Right cardiac atrium (tissue), 5 donors: ENCODE measurements at regions of chr17 and their contacts with region 1.

Region 1: GRCh38 chr17:6555331-6556120 is 829 bp downstream of the PITPNM3 start:
- DNase-seq: peak in 2 of 3 donors; percentile 54 to 67
- ATAC-seq: peak; percentile 38 to 50
- H3K4me3 ChIP-seq: peak overlapping the region; percentile 76
- H3K27ac ChIP-seq: no peak overlapping the region
- H3K4me1 ChIP-seq: no peaks in the 10 kb centered on the region
- H3K27me3 ChIP-seq: no peaks in the 10 kb centered on the region

Region 2: DNA sequence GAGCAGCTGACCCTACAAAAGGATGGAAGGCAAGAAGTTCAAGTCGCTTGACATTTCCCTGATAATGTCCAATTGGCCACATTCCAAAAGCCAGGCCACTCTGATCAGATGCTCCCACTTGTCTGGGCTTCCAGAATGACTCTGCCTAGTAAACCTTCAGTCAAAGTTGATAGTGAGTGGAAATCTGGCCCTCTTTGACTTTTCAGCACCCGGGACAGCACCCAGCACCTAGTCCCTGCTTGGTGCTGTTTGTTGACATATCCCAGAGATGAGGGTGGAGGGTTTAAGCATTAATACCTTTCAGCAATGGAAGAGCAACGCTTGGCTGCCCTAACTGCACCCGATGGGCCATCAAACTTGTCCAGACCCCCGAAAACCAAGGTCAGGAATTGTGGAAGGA is 251.9 kb before region 1 on chr17:
- intact Hi-C with region 1: no loop called
- DNase-seq: peak in 1 of 3 donors; percentile 13
- ATAC-seq: no peak
- H3K4me3 ChIP-seq: no peak overlapping the region
- H3K27ac ChIP-seq: no peak overlapping the region
- H3K4me1 ChIP-seq: no peaks in the 10 kb centered on the region
- H3K27me3 ChIP-seq: no peaks in the 10 kb centered on the region

Region 3: DNA sequence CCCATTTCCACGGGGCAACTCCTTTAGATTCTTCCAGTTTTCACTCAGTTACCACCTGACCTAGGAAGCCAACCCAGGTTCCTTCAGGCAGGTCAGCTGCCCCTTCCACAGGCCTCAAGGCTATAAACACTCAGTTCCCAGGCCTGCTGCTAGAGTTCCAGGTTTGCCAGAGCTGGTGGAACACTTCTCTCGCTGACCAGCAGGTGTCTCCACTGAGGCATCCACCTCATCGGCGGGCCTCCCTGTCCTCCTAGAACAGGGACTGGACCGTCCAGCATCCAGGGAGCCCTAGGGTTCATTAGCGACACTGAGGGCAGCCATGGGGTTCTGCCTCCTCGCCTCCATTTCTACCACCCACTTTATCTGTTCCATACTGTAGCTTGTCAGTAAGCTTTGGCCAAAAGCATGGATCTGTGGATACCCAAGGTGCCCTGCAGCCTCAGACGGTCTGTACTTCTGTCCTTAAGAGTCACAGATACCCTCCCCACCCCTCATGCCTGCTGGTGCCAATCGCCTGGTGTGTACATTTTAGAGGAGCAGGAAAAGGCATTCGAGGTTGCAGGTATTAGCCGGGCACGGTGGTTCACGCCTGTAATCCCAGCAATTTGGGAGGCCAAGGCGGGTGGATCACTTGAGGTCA is 82.3 kb before region 1 on chr17:
- intact Hi-C with region 1: loop called in 1 of 4 experiments (anchors 10 kb)
- DNase-seq: peak; percentile 71 to 91 (median 86)
- ATAC-seq: peak; percentile 65 to 74
- H3K4me3 ChIP-seq: no peak overlapping the region
- H3K27ac ChIP-seq: no peak overlapping the region
- H3K4me1 ChIP-seq: no peaks in the 10 kb centered on the region
- H3K27me3 ChIP-seq: no peaks in the 10 kb centered on the region